Tibial artery (tissue), 4 donors: ENCODE measurements at regions of chr5 and their contacts with region 1.

Region 1: GRCh38 chr5:76601470-76601869 is 21.7 kb downstream of the F2RL2 start:
- DNase-seq: no peak
- H3K4me3 ChIP-seq: no peak overlapping the region
- H3K27ac ChIP-seq: no peak overlapping the region
- H3K4me1 ChIP-seq: peaks cover 0 to 2% (median 0%) of the 10 kb centered on the region in 4 donors
- H3K27me3 ChIP-seq: no peaks in the 10 kb centered on the region
- CTCF ChIP-seq: peak; percentile 66 to 85

Region 2: DNA sequence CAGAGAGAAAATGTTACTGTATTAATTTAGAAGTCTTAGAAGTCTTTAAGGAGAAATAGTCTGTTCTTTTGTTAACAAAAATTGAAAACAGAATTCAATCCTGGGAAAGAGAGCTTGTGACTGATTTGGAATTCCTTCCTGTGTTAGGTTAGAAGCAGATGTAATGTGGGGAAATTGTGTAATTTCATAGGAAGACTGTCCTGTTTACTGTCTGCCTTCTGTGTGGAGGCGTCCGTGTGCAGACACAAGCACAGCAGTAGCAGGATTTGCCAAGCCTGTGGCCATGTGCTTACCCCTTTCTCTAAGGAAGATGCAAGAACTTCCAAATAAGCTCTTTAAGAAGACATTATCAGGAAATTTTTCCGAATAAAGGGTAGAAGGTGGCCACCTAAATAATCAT is 77.8 kb after region 1 on chr5:
- intact Hi-C with region 1: no loop called
- DNase-seq: no peak
- H3K4me3 ChIP-seq: no peak overlapping the region
- H3K27ac ChIP-seq: no peak overlapping the region
- H3K4me1 ChIP-seq: no peaks in the 10 kb centered on the region
- H3K27me3 ChIP-seq: no peaks in the 10 kb centered on the region
- CTCF ChIP-seq: no peak

Region 3: GRCh38 chr5:76771705-76772405 is 170.4 kb after region 1 on chr5:
- intact Hi-C with region 1: loop called (anchors 5 kb)
- DNase-seq: peak in 1 of 2 donors; percentile 5
- H3K4me3 ChIP-seq: no peak overlapping the region
- H3K27ac ChIP-seq: no peak overlapping the region
- H3K4me1 ChIP-seq: no peaks in the 10 kb centered on the region
- H3K27me3 ChIP-seq: no peaks in the 10 kb centered on the region
- CTCF ChIP-seq: no peak

Region 4: DNA sequence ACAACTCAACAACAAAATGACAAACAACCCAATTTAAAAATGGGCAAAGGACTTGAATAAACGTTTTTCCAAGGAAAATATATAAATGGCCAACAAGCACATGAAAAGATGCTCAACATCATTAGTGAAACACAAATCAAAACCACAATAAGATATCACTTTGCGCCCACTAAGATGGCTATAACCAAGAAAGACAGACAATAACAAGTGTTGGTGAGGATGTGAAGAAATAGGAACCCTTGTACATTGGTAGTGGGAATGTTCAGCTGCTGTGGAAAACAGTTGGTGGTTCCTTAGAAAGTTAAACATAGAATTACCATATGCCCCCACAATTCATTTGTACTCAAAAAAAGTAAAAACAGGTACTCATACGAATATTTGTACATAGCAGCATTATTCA is 929.8 kb after region 1 on chr5:
- intact Hi-C with region 1: no loop called
- DNase-seq: no peak
- H3K4me3 ChIP-seq: no peak overlapping the region
- H3K27ac ChIP-seq: no peak overlapping the region
- H3K4me1 ChIP-seq: no peaks in the 10 kb centered on the region
- H3K27me3 ChIP-seq: no peaks in the 10 kb centered on the region
- CTCF ChIP-seq: no peak